H1 (cell line): ENCODE measurements at regions of chr1 and their contacts with region 1.

Region 1: GRCh38 chr1:101653482-101653946 is 343.2 kb downstream of the OLFM3 start:
- DNase-seq: peak; percentile 56 to 67
- H3K4me3 ChIP-seq: peak overlapping the region in 1 of 4 experiments; percentile 34; a peak in 1 of 8 replicates
- H3K27ac ChIP-seq: peak overlapping the region; percentile 49; the same call in 1 of the 2 replicates
- H3K4me1 ChIP-seq: peaks cover 0 to 5% (median 3%) of the 10 kb centered on the region in 4 experiments; a peak in 3 of 7 replicates
- H3K27me3 ChIP-seq: no peaks in the 10 kb centered on the region
- CTCF ChIP-seq: peak; percentile 54 to 85 (median 73)
- EP300 ChIP-seq: no peak
- POLR2A ChIP-seq: no peak
- RAD21 ChIP-seq: peak; percentile 94 to 95

Region 2: GRCh38 chr1:101664726-101665125 is 11.2 kb after region 1 on chr1:
- CTCF ChIA-PET with region 1: interaction called, 20 read pairs
- POLR2A ChIA-PET with region 1: no interaction called
- DNase-seq: no peak
- H3K4me3 ChIP-seq: no peak overlapping the region
- H3K27ac ChIP-seq: no peak overlapping the region
- H3K4me1 ChIP-seq: no peaks in the 10 kb centered on the region
- H3K27me3 ChIP-seq: no peaks in the 10 kb centered on the region
- CTCF ChIP-seq: no peak
- EP300 ChIP-seq: no peak
- POLR2A ChIP-seq: no peak
- RAD21 ChIP-seq: no peak

Region 3: GRCh38 chr1:101996825-101997465 is 343.4 kb after region 1 on chr1 and contains the start of gene OLFM3:
- CTCF ChIA-PET with region 1: interaction called, 10 read pairs
- POLR2A ChIA-PET with region 1: no interaction called
- DNase-seq: peak; percentile 43 to 81
- H3K4me3 ChIP-seq: peak within 1 kb of the TSS; percentile 48 to 70 (median 52); a peak in 7 of 8 replicates
- H3K27ac ChIP-seq: no peak within 1 kb of the TSS
- H3K4me1 ChIP-seq: no peaks in the 10 kb centered on the region
- H3K27me3 ChIP-seq: no peaks in the 10 kb centered on the region
- CTCF ChIP-seq: no peak
- EP300 ChIP-seq: no peak
- POLR2A ChIP-seq: no peak
- RAD21 ChIP-seq: peak; percentile 14 to 36; a peak in 3 of 4 replicates
- total RNA-seq, gene OLFM3: 0.32 and 0.73 TPM in 2 replicates